Activated T-helper 2 cell treated with anti-CD3 and anti-CD28 coated beads, Interferon-gamma antibody, Interleukin-2, Interleukin-4, amounts not matched to agents 10 μg/mL and 5 μg/mL and 100 μg/mL, durations not matched to agents 14 hours and 24 hours and 36 hours (primary cell): ENCODE measurements at regions of chr1 and their contacts with region 1.

Region 1: DNA sequence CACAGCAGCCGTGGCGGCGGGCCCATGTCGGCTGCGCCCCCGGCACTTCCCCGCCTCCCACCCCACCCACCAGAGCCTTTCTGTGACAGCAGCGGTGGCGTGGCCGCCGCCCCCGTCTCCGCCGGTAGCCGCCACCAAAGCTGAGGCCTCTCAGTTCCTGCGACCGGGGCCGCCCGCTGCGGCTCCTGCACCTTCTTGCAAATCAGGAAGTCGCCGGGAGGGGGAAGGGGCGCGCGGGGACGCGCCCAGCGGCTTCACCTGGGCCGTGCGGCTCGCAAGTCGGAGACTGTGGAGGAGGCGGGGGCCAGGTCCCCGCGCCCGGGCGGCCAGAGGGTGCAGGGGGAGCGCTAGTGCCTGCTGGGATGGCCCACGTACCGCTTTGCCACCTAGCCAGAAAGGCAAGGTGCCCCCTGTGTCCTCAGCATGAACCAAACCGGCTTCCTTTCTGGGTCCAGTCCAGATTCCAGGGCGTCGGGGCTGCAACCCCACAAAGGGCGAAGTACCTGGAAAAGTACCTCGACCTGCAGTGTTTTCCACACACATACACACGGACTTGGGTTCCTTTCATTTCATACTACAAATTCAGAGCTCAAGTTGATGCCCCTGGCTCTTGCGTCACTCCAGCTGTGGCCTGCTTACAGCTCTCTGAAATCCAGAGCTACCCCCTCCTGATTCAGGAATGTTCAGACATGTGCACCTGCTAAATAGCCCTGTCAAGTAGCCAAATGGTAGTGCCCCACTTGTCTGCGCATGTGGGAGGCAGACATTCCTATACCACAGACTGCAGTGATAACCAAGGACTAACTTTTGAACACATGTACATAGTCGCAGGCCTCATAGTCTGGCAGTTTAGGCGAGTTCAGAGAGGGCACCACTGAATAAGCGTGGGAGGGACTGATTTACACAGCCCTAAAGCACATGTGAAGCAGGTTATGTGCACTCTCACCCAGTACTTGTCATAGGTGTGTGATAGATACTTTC is at the start of gene DENND1B:
- DNase-seq: peak; percentile 83
- H3K4me3 Mint-ChIP-seq: peak within 1 kb of the TSS; percentile 89
- H3K27ac Mint-ChIP-seq: peak within 1 kb of the TSS; percentile 99
- H3K4me1 Mint-ChIP-seq: peaks cover 62% of the 10 kb centered on the region
- H3K27me3 Mint-ChIP-seq: no peaks in the 10 kb centered on the region
- total RNA-seq, gene DENND1B: 18.2 and 19.0 TPM in 2 replicates

Region 2: GRCh38 chr1:197761621-197762020 is 14.0 kb before region 1 on chr1:
- intact Hi-C with region 1: loop called (anchors 1 kb)
- DNase-seq: no peak
- H3K4me3 Mint-ChIP-seq: no peak overlapping the region
- H3K27ac Mint-ChIP-seq: no peak overlapping the region
- H3K4me1 Mint-ChIP-seq: peaks cover 57% of the 10 kb centered on the region
- H3K27me3 Mint-ChIP-seq: no peaks in the 10 kb centered on the region

Region 3: GRCh38 chr1:197814306-197814705 is 38.7 kb after region 1 on chr1:
- intact Hi-C with region 1: no loop called
- DNase-seq: no peak
- H3K4me3 Mint-ChIP-seq: no peak overlapping the region
- H3K27ac Mint-ChIP-seq: no peak overlapping the region
- H3K4me1 Mint-ChIP-seq: no peaks in the 10 kb centered on the region
- H3K27me3 Mint-ChIP-seq: peaks cover 1% of the 10 kb centered on the region

Region 4: DNA sequence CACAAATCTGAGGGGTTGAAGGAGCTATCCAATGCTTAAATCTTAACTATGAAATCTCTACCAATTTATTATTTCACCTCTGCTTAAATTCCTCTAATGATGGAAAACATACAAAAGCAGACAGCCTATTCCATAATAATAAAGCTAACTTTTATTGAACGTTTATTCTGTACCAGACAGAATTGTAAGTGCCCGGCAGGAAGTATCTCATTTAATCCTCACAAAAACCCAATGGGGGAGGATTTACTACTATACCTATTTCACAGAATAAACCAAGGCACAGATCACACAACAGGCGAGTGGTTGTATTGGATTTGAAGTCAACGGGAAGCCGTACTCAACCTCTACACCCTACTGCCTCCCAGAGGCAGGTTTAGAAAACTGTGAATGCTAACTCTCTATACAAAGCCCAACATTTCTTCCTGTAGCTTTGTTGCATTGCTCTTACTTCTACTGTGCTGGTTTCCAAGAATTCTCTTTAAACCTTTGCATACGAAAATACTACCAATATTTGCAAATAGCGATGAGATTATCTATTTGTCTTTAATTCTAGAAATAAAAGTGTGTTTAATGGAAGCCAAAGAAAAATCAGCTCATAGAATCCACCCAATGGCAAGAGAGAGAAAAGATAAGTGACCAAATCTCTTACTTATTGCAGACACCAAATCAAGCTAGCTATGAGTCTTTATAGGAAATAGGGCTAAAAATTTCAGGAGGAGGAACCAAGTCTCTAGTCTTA is 93.3 kb after region 1 on chr1:
- intact Hi-C with region 1: loop called (anchors 5 kb)
- DNase-seq: peak; percentile 15
- H3K4me3 Mint-ChIP-seq: no peak overlapping the region
- H3K27ac Mint-ChIP-seq: no peak overlapping the region
- H3K4me1 Mint-ChIP-seq: peaks cover 5% of the 10 kb centered on the region
- H3K27me3 Mint-ChIP-seq: peaks cover 47% of the 10 kb centered on the region

Region 5: DNA sequence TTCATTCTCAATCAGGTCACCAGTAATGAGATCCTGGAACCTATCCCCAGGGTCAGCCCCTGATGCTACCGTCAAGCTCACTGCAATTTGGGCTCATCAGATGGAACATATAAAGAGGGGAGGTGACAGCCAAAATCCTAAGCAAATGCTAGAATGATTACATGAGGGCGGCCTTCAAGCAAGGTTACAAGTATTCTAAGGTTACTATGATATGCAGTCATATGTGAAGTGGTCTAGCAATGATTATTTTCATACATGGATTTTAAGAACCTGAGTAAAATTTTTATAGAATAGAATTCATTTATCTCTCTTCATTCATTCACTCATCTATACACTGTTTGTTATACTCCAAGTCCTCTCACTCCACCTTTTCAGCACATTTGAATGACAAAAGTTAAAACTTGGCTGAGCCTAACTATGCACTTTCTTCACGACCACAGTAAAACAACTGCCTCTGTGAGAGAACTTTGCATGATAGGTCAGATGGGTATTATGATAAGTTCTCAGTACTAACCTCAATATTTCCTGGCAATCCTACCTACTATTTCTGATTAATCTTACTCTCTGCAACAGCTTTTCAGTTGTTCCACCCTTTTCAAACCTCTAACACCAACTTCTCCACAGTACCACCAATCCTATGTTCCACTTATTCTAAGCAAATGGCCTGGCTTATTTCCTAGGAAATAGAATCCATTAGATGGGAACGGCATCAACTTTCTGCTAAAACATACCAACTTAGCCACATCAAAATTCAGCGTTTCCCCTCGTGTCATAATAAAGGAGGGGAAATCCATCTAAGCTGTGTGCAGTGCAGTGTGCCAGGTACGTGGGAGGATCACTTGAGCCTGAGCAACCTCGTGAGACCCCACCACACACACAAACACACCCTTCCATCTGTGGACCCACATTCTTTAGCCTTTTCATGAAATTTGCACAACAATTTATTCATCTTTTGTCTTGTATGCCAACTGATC is 173.6 kb after region 1 on chr1:
- intact Hi-C with region 1: loop called (anchors 5 kb)
- DNase-seq: no peak
- H3K4me3 Mint-ChIP-seq: peak overlapping the region; percentile 4
- H3K27ac Mint-ChIP-seq: peak overlapping the region; percentile 83
- H3K4me1 Mint-ChIP-seq: peaks cover 40% of the 10 kb centered on the region
- H3K27me3 Mint-ChIP-seq: no peaks in the 10 kb centered on the region